ENCODE measurements at regions of chr3 and their contacts with region 1.

Region 1: DNA sequence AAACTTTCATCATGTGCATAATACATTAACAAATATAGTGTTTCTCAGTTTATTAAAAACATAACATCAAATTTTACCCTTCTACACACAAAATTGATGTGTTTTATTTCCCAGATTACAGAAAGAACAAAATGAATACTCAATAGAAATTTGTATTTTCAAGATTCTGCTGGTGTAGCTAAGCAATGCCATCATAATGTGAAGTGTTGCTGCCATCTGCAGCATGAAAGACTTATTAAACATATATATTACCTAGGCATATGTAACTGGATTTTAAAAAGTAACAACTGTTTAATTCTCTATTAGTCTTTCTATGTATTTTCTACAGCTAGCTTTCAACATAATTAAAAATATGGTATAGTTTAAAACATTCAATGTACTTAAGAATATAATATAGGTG is 27.5 kb downstream of the PLSCR5 start:
- DNase-seq: no peak
- ATAC-seq: no peak
- H3K4me3 ChIP-seq: no peak overlapping the region
- H3K27ac ChIP-seq: no peak overlapping the region
- H3K4me1 ChIP-seq: no peaks in the 10 kb centered on the region
- H3K27me3 ChIP-seq: no peaks in the 10 kb centered on the region
- CTCF ChIP-seq: peak; percentile 38

Region 2: GRCh38 chr3:146218880-146219866 is 358.5 kb before region 1 on chr3:
- intact Hi-C with region 1: loop called in 1 of 2 experiments (anchors 10 kb)
- DNase-seq: peak in 1 of 2 donors; percentile 15
- ATAC-seq: no peak
- H3K4me3 ChIP-seq: no peak overlapping the region
- H3K27ac ChIP-seq: no peak overlapping the region
- H3K4me1 ChIP-seq: no peaks in the 10 kb centered on the region
- H3K27me3 ChIP-seq: no peaks in the 10 kb centered on the region
- CTCF ChIP-seq: peak; percentile 70

Region 3: DNA sequence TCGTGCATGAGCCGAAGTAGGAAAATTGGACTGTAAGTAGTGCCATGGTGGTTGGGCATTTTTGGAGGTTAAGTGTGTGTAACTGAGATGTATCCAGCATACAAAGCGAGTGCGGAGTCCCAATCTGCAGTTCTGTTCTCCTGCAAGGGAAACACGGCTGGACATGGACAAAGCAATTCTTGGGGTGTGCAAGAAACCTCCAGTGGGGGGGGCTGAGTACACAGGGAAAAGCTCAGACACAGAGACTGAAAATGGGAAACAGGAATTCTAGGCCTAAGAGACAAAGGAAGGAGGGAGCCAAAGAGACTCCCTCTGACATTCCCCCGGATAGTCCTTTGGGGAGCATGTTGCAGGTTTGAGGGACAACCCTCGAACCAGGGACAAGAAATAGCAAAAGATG is 243.5 kb before region 1 on chr3:
- intact Hi-C with region 1: loop called (anchors 5 to 10 kb)
- DNase-seq: no peak
- ATAC-seq: no peak
- H3K4me3 ChIP-seq: no peak overlapping the region
- H3K27ac ChIP-seq: no peak overlapping the region
- H3K4me1 ChIP-seq: no peaks in the 10 kb centered on the region
- H3K27me3 ChIP-seq: no peaks in the 10 kb centered on the region
- CTCF ChIP-seq: peak; percentile 14

Region 4: GRCh38 chr3:146517684-146518435 is 59.8 kb before region 1 on chr3:
- intact Hi-C with region 1: no loop called
- DNase-seq: no peak
- ATAC-seq: no peak
- H3K4me3 ChIP-seq: no peak overlapping the region
- H3K27ac ChIP-seq: no peak overlapping the region
- H3K4me1 ChIP-seq: no peaks in the 10 kb centered on the region
- H3K27me3 ChIP-seq: no peaks in the 10 kb centered on the region
- CTCF ChIP-seq: no peak

Measured in psoas muscle (tissue), 8 donors.